K562 (cell line): ENCODE measurements at regions of chr19 and their contacts with region 1.

Region 1: DNA sequence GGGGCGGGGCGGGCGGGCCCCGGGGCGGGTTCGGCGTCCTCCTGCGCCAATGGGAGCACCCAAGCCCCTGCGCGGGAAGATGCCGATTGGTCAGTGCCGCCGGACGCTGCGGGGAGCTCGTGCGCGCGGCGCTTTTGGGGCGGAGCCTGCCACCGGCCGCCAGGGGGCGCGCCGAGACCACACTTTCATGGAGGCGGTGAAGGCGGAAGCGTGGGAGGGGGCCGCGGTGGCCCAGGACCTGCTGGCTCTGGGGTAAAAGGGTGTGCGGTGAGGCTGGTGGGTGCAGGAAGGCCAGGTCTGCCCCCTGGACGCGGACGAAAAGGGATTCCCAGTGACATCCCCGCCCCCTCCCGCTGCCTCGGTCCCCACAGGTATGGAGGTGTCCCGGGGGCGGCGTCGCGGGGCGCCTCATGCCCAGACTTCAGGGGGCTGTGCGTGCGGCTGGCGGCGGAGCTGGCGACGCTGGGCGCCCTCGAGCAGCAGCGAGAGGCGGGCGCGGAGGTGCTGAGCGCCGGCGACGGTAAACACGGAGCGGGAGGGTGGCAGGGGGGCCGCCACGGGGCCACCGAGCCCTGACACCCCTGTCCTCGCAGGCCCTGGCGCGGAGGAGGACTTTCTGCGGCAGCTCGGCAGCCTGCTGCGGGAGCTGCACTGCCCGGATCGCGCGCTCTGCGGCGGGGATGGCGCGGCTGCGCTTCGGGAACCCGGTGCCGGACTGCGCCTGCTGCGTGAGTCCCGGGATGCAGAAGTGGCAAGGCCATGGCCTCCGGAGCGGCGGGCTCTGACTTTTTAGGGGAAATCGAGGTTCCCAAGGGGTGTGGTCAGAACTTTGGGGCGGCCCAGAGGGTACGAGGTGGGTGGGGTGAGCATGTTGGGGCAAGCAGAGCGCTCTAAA is at the start of gene FAM98C:
- DNase-seq: peak; percentile 99 to 100 (median 100)
- ATAC-seq: peak; percentile 99
- H3K4me3 ChIP-seq: peak within 1 kb of the TSS; percentile 83
- H3K27ac ChIP-seq: peak within 1 kb of the TSS; percentile 89
- H3K4me1 ChIP-seq: peaks cover 6 to 33% of the 10 kb centered on the region in 2 experiments; a peak in 4 of 5 replicates
- H3K27me3 ChIP-seq: no peaks in the 10 kb centered on the region
- CTCF ChIP-seq: peak; percentile 91 to 95 (median 91)
- EP300 ChIP-seq: no peak
- POLR2A ChIP-seq: peak; percentile 69
- RAD21 ChIP-seq: peak; percentile 94 to 96
- polyA plus RNA-seq, gene FAM98C: 1.7 to 4.3 TPM

Region 2: GRCh38 chr19:38351865-38352395 is 51.3 kb before region 1 on chr19:
- CTCF ChIA-PET with region 1: no interaction called
- POLR2A ChIA-PET with region 1: no interaction called
- in situ Hi-C with region 1: no loop called
- intact Hi-C with region 1: no loop called
- DNase-seq: no peak
- ATAC-seq: peak; percentile 61
- H3K4me3 ChIP-seq: no peak overlapping the region
- H3K27ac ChIP-seq: no peak overlapping the region
- H3K4me1 ChIP-seq: peaks cover 0 to 4% of the 10 kb centered on the region in 2 experiments; a peak in 2 of 5 replicates
- H3K27me3 ChIP-seq: peaks cover 0 to 8% of the 10 kb centered on the region in 2 experiments; a peak in 2 of 5 replicates
- CTCF ChIP-seq: no peak
- EP300 ChIP-seq: no peak
- POLR2A ChIP-seq: no peak
- RAD21 ChIP-seq: 0 out of 4 replicates have a peak, but pooled peaks of 1 of the 2 experiments have one; percentile 3

Region 3: GRCh38 chr19:38441657-38442348 is 38.6 kb after region 1 on chr19:
- CTCF ChIA-PET with region 1: interaction called, 12 read pairs
- POLR2A ChIA-PET with region 1: interaction called, 4 read pairs
- in situ Hi-C with region 1: no loop called
- intact Hi-C with region 1: loop called (anchors 1 kb)
- DNase-seq: peak; percentile 57 to 68 (median 64)
- ATAC-seq: peak; percentile 97
- H3K4me3 ChIP-seq: no peak overlapping the region
- H3K27ac ChIP-seq: no peak overlapping the region
- H3K4me1 ChIP-seq: peaks cover 0 to 21% of the 10 kb centered on the region in 2 experiments; a peak in 2 of 5 replicates
- H3K27me3 ChIP-seq: no peaks in the 10 kb centered on the region
- CTCF ChIP-seq: peak; percentile 64 to 69 (median 67)
- EP300 ChIP-seq: no peak
- POLR2A ChIP-seq: no peak
- RAD21 ChIP-seq: peak; percentile 20 to 77; a peak in 2 of 4 replicates

Region 4: GRCh38 chr19:38458991-38459390 is 55.8 kb after region 1 on chr19:
- CTCF ChIA-PET with region 1: no interaction called
- POLR2A ChIA-PET with region 1: no interaction called
- in situ Hi-C with region 1: no loop called
- intact Hi-C with region 1: no loop called
- DNase-seq: no peak
- ATAC-seq: no peak
- H3K4me3 ChIP-seq: no peak overlapping the region
- H3K27ac ChIP-seq: no peak overlapping the region
- H3K4me1 ChIP-seq: peaks cover 0 to 5% of the 10 kb centered on the region in 2 experiments; a peak in 1 of 5 replicates
- H3K27me3 ChIP-seq: no peaks in the 10 kb centered on the region
- CTCF ChIP-seq: no peak
- EP300 ChIP-seq: no peak
- POLR2A ChIP-seq: no peak
- RAD21 ChIP-seq: no peak

Region 5: DNA sequence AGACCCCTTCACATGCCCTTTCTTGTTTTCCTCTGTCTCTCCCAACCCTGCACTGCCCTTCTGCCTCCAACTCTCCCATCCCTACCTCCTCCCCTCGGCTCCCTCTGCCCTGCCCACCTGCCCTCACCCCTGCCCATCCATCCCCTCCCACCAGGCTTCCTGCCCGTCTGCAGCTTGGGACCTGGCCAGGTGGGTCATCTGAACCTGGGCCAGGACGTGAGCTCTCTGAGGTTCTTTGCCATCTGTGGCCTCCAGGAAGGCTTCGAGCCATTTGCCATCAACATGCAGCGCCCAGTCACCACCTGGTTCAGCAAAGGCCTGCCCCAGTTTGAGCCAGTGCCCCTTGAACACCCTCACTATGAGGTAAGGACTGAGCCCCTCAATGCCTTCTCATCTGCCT is 65.9 kb after region 1 on chr19:
- CTCF ChIA-PET with region 1: no interaction called
- POLR2A ChIA-PET with region 1: no interaction called
- in situ Hi-C with region 1: no loop called
- intact Hi-C with region 1: no loop called
- DNase-seq: no peak
- ATAC-seq: no peak
- H3K4me3 ChIP-seq: no peak overlapping the region
- H3K27ac ChIP-seq: no peak overlapping the region
- H3K4me1 ChIP-seq: peaks cover 0 to 12% of the 10 kb centered on the region in 2 experiments; a peak in 1 of 5 replicates
- H3K27me3 ChIP-seq: no peaks in the 10 kb centered on the region
- CTCF ChIP-seq: no peak
- EP300 ChIP-seq: no peak
- POLR2A ChIP-seq: no peak
- RAD21 ChIP-seq: no peak

Region 6: GRCh38 chr19:38496603-38497487 is 93.6 kb after region 1 on chr19:
- CTCF ChIA-PET with region 1: no interaction called
- POLR2A ChIA-PET with region 1: no interaction called
- in situ Hi-C with region 1: no loop called
- intact Hi-C with region 1: no loop called
- DNase-seq: no peak
- ATAC-seq: no peak
- H3K4me3 ChIP-seq: no peak overlapping the region
- H3K27ac ChIP-seq: no peak overlapping the region; the same call in 2 of the 3 replicates
- H3K4me1 ChIP-seq: peaks cover 0 to 7% of the 10 kb centered on the region in 2 experiments; a peak in 1 of 5 replicates
- H3K27me3 ChIP-seq: no peaks in the 10 kb centered on the region
- CTCF ChIP-seq: no peak
- EP300 ChIP-seq: no peak
- POLR2A ChIP-seq: no peak
- RAD21 ChIP-seq: no peak

Region 7: DNA sequence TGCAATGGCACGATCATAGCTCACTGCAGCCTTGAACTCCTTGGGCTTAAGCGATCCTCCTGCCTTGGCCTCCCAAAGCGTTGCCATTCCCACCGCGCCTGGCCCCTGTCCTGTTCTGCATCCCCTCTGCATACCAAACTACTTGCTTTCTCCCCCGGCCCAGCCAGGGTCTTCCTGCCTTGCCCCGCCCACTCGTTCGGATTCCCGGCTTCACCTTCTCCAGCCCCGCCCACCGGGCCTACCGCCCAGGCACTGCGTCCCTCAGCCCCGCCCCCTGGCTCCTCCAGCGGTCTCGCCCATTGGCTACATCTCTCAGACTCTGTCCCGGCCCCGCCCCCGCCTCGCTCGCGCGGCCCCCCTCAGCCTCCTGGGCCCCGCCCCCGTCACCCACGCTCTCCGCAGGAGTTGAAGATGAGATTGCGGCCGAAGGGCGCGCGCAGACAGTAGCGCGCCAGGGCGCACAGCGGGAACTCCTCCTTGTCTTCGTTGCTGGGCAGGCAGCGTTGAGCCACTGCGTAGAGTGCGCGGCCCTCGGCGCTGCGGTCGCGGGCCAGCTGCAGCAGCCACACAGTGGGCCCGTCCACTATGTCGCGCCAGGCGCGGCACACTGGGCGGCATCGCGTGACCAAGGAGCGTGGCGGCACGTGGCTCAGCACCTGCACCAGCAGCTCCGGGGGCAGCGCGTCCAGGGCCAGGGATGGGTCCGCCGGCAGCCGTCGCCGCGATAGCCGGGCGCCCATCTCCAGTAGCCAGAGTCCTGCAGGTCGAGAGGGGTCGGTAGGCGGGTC is 546.6 kb after region 1 on chr19:
- CTCF ChIA-PET with region 1: interaction called, 7 read pairs
- POLR2A ChIA-PET with region 1: no interaction called
- in situ Hi-C with region 1: no loop called
- intact Hi-C with region 1: loop called (anchors 5 kb)
- DNase-seq: peak in 1 of 4 experiments; percentile 52
- ATAC-seq: no peak; the same call in 2 of the 3 replicates
- H3K4me3 ChIP-seq: no peak overlapping the region
- H3K27ac ChIP-seq: no peak overlapping the region
- H3K4me1 ChIP-seq: peaks cover 0 to 16% of the 10 kb centered on the region in 2 experiments; a peak in 2 of 5 replicates
- H3K27me3 ChIP-seq: no peaks in the 10 kb centered on the region
- CTCF ChIP-seq: no peak
- EP300 ChIP-seq: no peak
- POLR2A ChIP-seq: no peak
- RAD21 ChIP-seq: no peak